ENCODE measurements at regions of chr16 and their contacts with region 1.

Region 1: DNA sequence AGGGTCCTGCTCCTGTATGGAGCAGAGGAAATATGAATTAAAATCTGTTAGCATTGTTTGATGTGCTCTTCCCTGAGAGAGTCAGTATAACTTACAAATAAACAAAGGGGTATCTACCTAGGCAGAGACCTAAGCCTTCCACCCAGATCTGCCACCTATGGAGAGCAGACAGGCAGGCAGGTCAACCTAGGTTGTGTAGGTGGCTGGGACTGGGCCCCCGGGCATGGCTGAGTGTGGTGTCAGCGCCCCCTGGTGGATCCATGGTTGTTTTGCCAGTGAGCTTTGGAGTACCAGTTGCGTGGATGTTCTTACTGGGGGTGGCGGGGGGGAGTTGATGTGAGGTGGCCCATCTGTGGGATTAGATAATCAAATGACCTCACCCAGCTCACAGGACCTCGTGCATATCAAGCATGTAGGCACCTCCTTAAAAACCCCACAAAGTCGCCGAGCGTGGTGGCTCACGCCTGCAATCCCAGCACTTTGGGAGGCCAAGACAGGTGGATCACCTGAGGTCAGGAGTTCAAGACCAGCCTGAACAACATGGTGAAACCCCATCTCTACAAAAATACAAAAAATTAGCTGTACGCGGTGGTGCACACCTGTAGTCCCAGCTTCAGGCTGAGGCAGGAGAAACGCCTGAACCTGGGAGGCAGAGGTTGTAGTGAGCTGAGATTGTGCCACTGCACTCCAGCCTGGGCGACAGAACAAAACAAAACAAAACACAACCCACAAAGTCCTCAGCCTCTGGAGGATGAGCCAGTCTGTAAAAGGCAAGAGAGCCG is 17.6 kb downstream of the DUS2 start:
- DNase-seq: peak; percentile 84 to 88 (median 85)
- H3K4me3 ChIP-seq: no peak overlapping the region
- H3K4me3 Mint-ChIP-seq: no peak overlapping the region
- H3K27ac ChIP-seq: no peak overlapping the region
- H3K27ac Mint-ChIP-seq: peak overlapping the region; percentile 29 to 77 (median 44)
- H3K4me1 ChIP-seq: peaks cover 9% of the 10 kb centered on the region
- H3K4me1 Mint-ChIP-seq: peaks cover 6 to 16% (median 12%) of the 10 kb centered on the region in 4 donors
- H3K27me3 ChIP-seq: no peaks in the 10 kb centered on the region
- H3K27me3 Mint-ChIP-seq: no peaks in the 10 kb centered on the region

Region 2: GRCh38 chr16:67736858-67737257 is 303.8 kb before region 1 on chr16:
- CTCF ChIA-PET with region 1: no interaction called
- POLR2A ChIA-PET with region 1: no interaction called
- intact Hi-C with region 1: no loop called
- DNase-seq: no peak
- H3K4me3 ChIP-seq: no peak overlapping the region
- H3K4me3 Mint-ChIP-seq: no peak overlapping the region
- H3K27ac ChIP-seq: no peak overlapping the region
- H3K27ac Mint-ChIP-seq: peak overlapping the region in 2 of 7 donors; percentile 22 to 32
- H3K4me1 ChIP-seq: no peaks in the 10 kb centered on the region
- H3K4me1 Mint-ChIP-seq: peaks cover 0 to 4% (median 0%) of the 10 kb centered on the region in 4 donors
- H3K27me3 ChIP-seq: no peaks in the 10 kb centered on the region
- H3K27me3 Mint-ChIP-seq: no peaks in the 10 kb centered on the region

Region 3: DNA sequence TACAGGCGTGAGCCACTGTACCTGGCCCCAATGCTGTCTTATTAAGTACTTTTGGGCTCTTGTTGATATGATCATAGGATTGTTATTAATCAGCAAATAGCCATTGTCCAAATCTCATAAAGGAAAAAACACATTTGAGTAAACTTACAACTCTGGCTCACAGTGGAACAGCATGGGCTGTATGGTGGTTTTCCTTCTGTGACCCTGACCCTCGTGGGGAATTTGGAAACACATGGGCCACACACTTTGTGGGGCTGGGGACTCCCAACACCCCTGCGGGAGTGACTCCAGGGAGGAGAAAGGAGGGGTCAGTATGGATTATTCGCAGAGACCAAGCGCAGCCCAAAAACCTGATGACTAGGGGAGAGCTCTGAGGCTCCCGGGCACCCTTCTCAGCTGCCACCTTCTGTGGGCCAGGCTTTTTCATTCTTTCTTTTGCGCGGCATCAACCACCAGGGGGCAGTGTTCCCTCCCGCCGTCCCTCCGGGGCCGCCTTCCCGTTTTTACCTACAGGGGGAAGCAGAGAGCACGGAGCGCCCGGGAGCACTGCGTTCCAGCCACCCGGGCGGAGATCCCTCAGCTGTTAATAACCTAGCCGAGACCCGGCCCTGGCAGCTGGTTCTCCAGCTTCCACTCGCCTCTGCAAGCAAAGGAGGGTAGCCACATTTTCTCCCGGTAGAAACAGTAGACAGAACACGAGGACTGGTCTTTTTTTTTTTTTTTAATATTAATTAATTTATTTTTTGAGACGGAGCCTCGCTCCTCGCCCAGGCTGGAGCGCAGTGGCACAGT is 224.3 kb before region 1 on chr16:
- CTCF ChIA-PET with region 1: interaction called, 13 read pairs
- POLR2A ChIA-PET with region 1: no interaction called
- intact Hi-C with region 1: loop called (anchors 1 kb)
- DNase-seq: peak; percentile 83 to 92 (median 85)
- H3K4me3 ChIP-seq: no peak overlapping the region
- H3K4me3 Mint-ChIP-seq: peak overlapping the region in 1 of 8 donors; percentile 61
- H3K27ac ChIP-seq: no peak overlapping the region
- H3K27ac Mint-ChIP-seq: peak overlapping the region in 4 of 7 donors; percentile 75 to 92 (median 82)
- H3K4me1 ChIP-seq: no peaks in the 10 kb centered on the region
- H3K4me1 Mint-ChIP-seq: peaks cover 0 to 8% (median 5%) of the 10 kb centered on the region in 4 donors
- H3K27me3 ChIP-seq: no peaks in the 10 kb centered on the region
- H3K27me3 Mint-ChIP-seq: no peaks in the 10 kb centered on the region

Region 4: DNA sequence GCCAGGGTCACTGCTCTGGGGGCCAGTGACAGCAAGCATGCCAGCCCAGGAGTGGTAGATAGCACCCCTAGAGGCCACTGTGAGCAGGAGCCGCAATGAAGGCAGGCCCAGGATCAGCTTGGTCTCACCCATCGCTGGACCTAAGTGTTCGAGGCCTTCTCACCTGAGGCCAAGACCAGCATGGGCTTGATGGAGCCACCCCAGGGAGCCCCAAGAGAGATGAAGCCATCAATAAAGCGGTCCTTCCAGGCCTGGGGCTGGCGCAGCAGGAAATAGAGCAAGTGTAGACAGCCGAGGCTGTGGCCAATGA is 98.5 kb before region 1 on chr16:
- CTCF ChIA-PET with region 1: interaction called, 11 read pairs
- POLR2A ChIA-PET with region 1: no interaction called
- intact Hi-C with region 1: no loop called
- DNase-seq: peak in 4 of 5 donors; percentile 17 to 32 (median 22)
- H3K4me3 ChIP-seq: no peak overlapping the region
- H3K4me3 Mint-ChIP-seq: no peak overlapping the region
- H3K27ac ChIP-seq: peak overlapping the region; percentile 9
- H3K27ac Mint-ChIP-seq: peak overlapping the region in 2 of 7 donors; percentile 70 to 79
- H3K4me1 ChIP-seq: peaks cover 39% of the 10 kb centered on the region
- H3K4me1 Mint-ChIP-seq: peaks cover 18 to 33% (median 25%) of the 10 kb centered on the region in 4 donors
- H3K27me3 ChIP-seq: no peaks in the 10 kb centered on the region
- H3K27me3 Mint-ChIP-seq: no peaks in the 10 kb centered on the region

Region 5: GRCh38 chr16:67993189-67994039 is 47.3 kb before region 1 on chr16:
- CTCF ChIA-PET with region 1: interaction called, 54 read pairs
- POLR2A ChIA-PET with region 1: interaction called, 8 read pairs
- intact Hi-C with region 1: loop called (anchors 1 kb)
- DNase-seq: peak; percentile 81 to 83 (median 81)
- H3K4me3 ChIP-seq: peak overlapping the region; percentile 17 to 70
- H3K4me3 Mint-ChIP-seq: peak overlapping the region; percentile 85 to 92 (median 88)
- H3K27ac ChIP-seq: peak overlapping the region; percentile 73
- H3K27ac Mint-ChIP-seq: peak overlapping the region; percentile 95 to 98 (median 96)
- H3K4me1 ChIP-seq: peaks cover 45% of the 10 kb centered on the region
- H3K4me1 Mint-ChIP-seq: peaks cover 16 to 53% (median 35%) of the 10 kb centered on the region in 4 donors
- H3K27me3 ChIP-seq: no peaks in the 10 kb centered on the region
- H3K27me3 Mint-ChIP-seq: no peaks in the 10 kb centered on the region

Region 6: GRCh38 chr16:68005786-68006286 is 34.9 kb before region 1 on chr16:
- CTCF ChIA-PET with region 1: interaction called, 39 read pairs
- POLR2A ChIA-PET with region 1: interaction called, 12 read pairs
- intact Hi-C with region 1: no loop called
- DNase-seq: peak; percentile 61 to 77 (median 67)
- H3K4me3 ChIP-seq: no peak overlapping the region
- H3K4me3 Mint-ChIP-seq: peak overlapping the region in 7 of 8 donors; percentile 46 to 76 (median 60)
- H3K27ac ChIP-seq: peak overlapping the region; percentile 29
- H3K27ac Mint-ChIP-seq: peak overlapping the region; percentile 81 to 97 (median 95)
- H3K4me1 ChIP-seq: peaks cover 56% of the 10 kb centered on the region
- H3K4me1 Mint-ChIP-seq: peaks cover 22 to 53% (median 37%) of the 10 kb centered on the region in 4 donors
- H3K27me3 ChIP-seq: no peaks in the 10 kb centered on the region
- H3K27me3 Mint-ChIP-seq: no peaks in the 10 kb centered on the region

Region 7: DNA sequence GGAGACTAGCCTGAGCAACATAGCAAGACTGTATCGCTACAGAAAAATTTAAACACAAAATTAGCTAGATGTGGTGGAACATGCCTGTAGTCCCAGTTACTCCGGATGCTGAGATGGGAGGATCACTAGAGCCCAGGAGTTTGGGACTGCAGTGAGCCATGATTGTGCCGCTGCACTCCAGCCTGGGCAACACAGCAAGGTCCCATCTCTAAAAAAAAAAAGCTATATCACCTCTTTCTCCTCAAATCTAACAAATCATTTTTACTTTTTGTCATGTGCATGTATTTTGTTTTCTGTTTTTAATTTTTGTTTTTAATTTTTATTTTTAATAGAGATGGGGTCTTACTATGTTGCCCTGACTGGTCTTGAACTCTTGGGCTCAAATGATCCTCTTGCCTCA is 11.7 kb before region 1 on chr16:
- CTCF ChIA-PET with region 1: interaction called, 18 read pairs
- POLR2A ChIA-PET with region 1: no interaction called
- intact Hi-C with region 1: no loop called
- DNase-seq: no peak
- H3K4me3 ChIP-seq: no peak overlapping the region
- H3K4me3 Mint-ChIP-seq: no peak overlapping the region
- H3K27ac ChIP-seq: no peak overlapping the region
- H3K27ac Mint-ChIP-seq: peak overlapping the region in 1 of 7 donors; percentile 36
- H3K4me1 ChIP-seq: peaks cover 7% of the 10 kb centered on the region
- H3K4me1 Mint-ChIP-seq: peaks cover 2 to 14% (median 4%) of the 10 kb centered on the region in 4 donors
- H3K27me3 ChIP-seq: no peaks in the 10 kb centered on the region
- H3K27me3 Mint-ChIP-seq: no peaks in the 10 kb centered on the region

Region 8: DNA sequence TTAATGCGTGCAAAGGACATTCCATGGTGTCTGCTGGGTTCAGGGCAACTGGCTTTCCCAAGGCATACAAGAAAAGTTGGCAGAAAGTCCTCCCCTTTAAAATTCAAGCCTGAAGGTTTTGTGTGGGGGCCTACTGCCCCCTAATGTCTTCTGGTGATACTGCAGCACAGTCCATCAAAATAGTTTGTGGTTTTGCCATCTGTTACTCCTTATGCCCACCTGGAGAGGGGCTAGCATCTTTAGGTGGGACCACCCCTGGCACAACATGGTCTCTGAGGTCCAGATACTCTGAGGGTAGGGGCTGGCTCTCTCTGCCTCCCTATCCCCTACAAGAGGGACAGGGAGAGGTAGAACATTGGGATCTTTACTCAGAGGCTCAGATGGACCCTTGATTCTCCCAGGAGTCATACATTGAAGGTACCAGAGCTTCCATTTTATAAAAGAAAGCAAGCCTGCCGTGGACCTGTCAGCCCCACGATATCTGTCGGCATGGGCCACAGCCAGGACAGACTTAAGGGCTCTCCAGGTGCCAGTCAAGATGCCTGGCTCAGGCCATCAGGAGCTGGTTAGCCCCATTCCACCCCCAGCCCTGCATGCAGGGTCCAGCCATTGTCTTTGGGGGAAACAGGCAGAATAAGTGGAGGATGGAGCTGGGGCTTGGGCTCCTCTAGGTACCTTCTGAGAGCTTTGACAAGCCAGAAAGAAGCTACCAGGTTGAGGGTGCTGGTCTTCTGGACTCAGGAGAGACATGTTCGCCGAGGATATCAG is 188.9 kb after region 1 on chr16:
- CTCF ChIA-PET with region 1: interaction called, 6 read pairs
- POLR2A ChIA-PET with region 1: no interaction called
- intact Hi-C with region 1: loop called (anchors 1 kb)
- DNase-seq: peak in 4 of 5 donors; percentile 44 to 55 (median 52)
- H3K4me3 ChIP-seq: no peak overlapping the region
- H3K4me3 Mint-ChIP-seq: peak overlapping the region in 1 of 8 donors; percentile 31
- H3K27ac ChIP-seq: no peak overlapping the region
- H3K27ac Mint-ChIP-seq: peak overlapping the region in 6 of 7 donors; percentile 10 to 89 (median 51)
- H3K4me1 ChIP-seq: peaks cover 23% of the 10 kb centered on the region
- H3K4me1 Mint-ChIP-seq: peaks cover 21 to 51% (median 34%) of the 10 kb centered on the region in 4 donors
- H3K27me3 ChIP-seq: no peaks in the 10 kb centered on the region
- H3K27me3 Mint-ChIP-seq: no peaks in the 10 kb centered on the region